Common myeloid progenitor, CD34-positive (primary cell): ENCODE measurements at regions of chr20 and their contacts with region 1.

Region 1: GRCh38 chr20:50085452-50086365 is 27.2 kb downstream of the UBE2V1 start:
- DNase-seq: peak; percentile 65 to 84 (median 80)
- H3K4me3 ChIP-seq: peak overlapping the region in 6 of 7 experiments; percentile 10 to 72 (median 54)
- H3K27ac ChIP-seq: peak overlapping the region; percentile 27 to 52
- H3K4me1 ChIP-seq: peaks cover 8 to 42% (median 29%) of the 10 kb centered on the region in 4 experiments
- H3K27me3 ChIP-seq: no peaks in the 10 kb centered on the region

Region 2: GRCh38 chr20:49928401-49929141 is 157.1 kb before region 1 on chr20:
- CTCF ChIA-PET with region 1: no interaction called
- POLR2A ChIA-PET with region 1: no interaction called
- DNase-seq: peak; percentile 86 to 93 (median 91)
- H3K4me3 ChIP-seq: peak overlapping the region in 2 of 7 experiments; percentile 12 to 19
- H3K27ac ChIP-seq: no peak overlapping the region
- H3K4me1 ChIP-seq: peaks cover 0 to 3% (median 2%) of the 10 kb centered on the region in 4 experiments
- H3K27me3 ChIP-seq: no peaks in the 10 kb centered on the region

Region 3: DNA sequence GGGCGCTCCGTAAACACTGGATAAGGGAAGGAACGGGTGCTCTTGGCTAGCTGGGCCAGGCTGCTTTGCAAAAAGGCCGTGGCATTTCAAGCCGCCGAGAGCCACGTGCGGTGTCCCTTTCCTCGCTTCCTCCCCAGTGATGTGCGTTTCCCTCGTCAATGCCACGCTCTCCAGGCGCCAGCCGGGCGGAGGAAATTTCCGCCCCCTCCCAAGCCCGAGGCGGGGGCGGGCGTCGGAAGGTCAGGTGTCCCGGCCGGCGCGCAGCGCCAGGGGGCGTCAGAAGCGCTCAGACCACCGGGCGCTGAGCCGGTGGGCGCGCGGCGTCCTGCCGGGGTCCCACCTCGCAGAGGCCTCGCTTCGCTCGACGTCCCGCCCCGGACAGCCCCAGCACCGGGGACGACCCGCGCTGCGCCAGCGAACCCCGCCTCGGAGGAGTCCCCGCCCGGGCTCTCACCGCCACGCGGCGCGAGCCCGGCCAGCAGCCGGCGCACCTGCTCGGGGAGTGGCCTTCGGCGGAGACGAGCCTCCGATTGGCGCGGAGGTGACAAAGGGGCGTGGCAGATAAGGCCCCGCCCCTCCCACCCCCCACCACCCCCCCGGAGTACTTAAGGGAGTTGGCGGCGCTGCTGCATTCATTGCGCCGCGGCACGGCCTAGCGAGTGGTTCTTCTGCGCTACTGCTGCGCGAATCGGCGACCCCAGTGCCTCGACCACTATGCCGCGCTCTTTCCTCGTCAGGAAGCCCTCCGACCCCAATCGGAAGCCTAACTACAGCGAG is 103.2 kb before region 1 on chr20 and contains the start of gene SNAI1:
- CTCF ChIA-PET with region 1: interaction called, 31 read pairs
- POLR2A ChIA-PET with region 1: no interaction called
- DNase-seq: peak; percentile 83 to 93 (median 92)
- H3K4me3 ChIP-seq: peak within 1 kb of the TSS in 6 of 7 experiments; percentile 42 to 73 (median 61)
- H3K27ac ChIP-seq: peak within 1 kb of the TSS in 1 of 2 experiments; percentile 78
- H3K4me1 ChIP-seq: peaks cover 0 to 70% (median 35%) of the 10 kb centered on the region in 4 experiments
- H3K27me3 ChIP-seq: no peaks in the 10 kb centered on the region

Region 4: GRCh38 chr20:50027611-50028105 is 58.1 kb before region 1 on chr20:
- CTCF ChIA-PET with region 1: no interaction called
- POLR2A ChIA-PET with region 1: no interaction called
- DNase-seq: no peak
- H3K4me3 ChIP-seq: no peak overlapping the region
- H3K27ac ChIP-seq: no peak overlapping the region
- H3K4me1 ChIP-seq: peaks cover 0 to 13% (median 0%) of the 10 kb centered on the region in 4 experiments
- H3K27me3 ChIP-seq: no peaks in the 10 kb centered on the region

Region 5: GRCh38 chr20:50070991-50071888 is 14.5 kb before region 1 on chr20:
- CTCF ChIA-PET with region 1: interaction called, 58 read pairs
- POLR2A ChIA-PET with region 1: no interaction called
- DNase-seq: peak; percentile 79 to 88 (median 84)
- H3K4me3 ChIP-seq: peak overlapping the region in 5 of 7 experiments; percentile 47 to 77 (median 63)
- H3K27ac ChIP-seq: no peak overlapping the region
- H3K4me1 ChIP-seq: peaks cover 0 to 8% (median 3%) of the 10 kb centered on the region in 4 experiments
- H3K27me3 ChIP-seq: no peaks in the 10 kb centered on the region

Region 6: DNA sequence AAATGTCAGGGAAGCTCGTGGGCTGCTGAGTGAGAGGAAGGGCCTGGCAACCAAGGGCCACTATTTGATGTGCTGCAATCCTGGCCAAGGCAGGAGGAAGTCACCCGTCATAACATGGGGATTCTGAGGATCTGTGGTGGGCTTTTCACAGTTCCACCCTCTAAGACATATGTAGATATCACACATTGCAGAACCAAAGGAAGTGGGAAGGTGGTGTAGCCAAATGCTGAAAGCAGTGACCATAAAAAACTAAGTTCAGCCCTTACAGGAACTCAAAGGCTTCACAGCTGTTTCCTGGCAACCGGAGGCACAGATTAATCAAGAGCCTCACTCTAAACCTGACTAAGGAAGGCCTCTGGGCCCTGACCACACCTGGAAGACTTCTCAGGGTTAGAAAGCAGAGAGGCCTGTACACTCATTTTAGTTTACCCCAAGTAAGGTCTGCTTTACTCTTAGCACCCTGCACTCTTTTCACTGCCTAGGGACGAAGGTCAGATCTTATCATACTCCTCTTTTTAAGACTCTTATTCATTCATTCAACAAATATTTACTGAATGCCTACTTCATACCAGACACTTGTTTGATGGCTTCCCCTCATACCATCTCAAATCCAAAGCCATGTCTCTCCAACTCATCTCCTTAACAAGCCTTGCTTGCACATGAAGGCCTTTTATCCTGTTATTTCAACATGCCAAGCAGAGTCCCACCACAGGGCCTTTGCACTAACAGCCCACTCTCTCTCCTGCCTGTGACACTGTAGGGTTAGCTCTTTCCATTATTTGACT is 24.6 kb after region 1 on chr20:
- CTCF ChIA-PET with region 1: interaction called, 10 read pairs
- POLR2A ChIA-PET with region 1: no interaction called
- DNase-seq: peak; percentile 93 to 100 (median 99)
- H3K4me3 ChIP-seq: peak overlapping the region in 4 of 7 experiments; percentile 3 to 91 (median 72)
- H3K27ac ChIP-seq: peak overlapping the region; percentile 33 to 59
- H3K4me1 ChIP-seq: peaks cover 52 to 78% (median 71%) of the 10 kb centered on the region in 4 experiments
- H3K27me3 ChIP-seq: no peaks in the 10 kb centered on the region

Region 7: GRCh38 chr20:50115591-50116372 is 30.1 kb after region 1 on chr20:
- CTCF ChIA-PET with region 1: interaction called, 10 read pairs
- POLR2A ChIA-PET with region 1: interaction called, 3 read pairs
- DNase-seq: peak; percentile 93 to 95 (median 94)
- H3K4me3 ChIP-seq: peak overlapping the region in 6 of 7 experiments; percentile 69 to 96 (median 78)
- H3K27ac ChIP-seq: peak overlapping the region; percentile 40 to 71
- H3K4me1 ChIP-seq: peaks cover 33 to 54% (median 47%) of the 10 kb centered on the region in 4 experiments
- H3K27me3 ChIP-seq: no peaks in the 10 kb centered on the region

Region 8: DNA sequence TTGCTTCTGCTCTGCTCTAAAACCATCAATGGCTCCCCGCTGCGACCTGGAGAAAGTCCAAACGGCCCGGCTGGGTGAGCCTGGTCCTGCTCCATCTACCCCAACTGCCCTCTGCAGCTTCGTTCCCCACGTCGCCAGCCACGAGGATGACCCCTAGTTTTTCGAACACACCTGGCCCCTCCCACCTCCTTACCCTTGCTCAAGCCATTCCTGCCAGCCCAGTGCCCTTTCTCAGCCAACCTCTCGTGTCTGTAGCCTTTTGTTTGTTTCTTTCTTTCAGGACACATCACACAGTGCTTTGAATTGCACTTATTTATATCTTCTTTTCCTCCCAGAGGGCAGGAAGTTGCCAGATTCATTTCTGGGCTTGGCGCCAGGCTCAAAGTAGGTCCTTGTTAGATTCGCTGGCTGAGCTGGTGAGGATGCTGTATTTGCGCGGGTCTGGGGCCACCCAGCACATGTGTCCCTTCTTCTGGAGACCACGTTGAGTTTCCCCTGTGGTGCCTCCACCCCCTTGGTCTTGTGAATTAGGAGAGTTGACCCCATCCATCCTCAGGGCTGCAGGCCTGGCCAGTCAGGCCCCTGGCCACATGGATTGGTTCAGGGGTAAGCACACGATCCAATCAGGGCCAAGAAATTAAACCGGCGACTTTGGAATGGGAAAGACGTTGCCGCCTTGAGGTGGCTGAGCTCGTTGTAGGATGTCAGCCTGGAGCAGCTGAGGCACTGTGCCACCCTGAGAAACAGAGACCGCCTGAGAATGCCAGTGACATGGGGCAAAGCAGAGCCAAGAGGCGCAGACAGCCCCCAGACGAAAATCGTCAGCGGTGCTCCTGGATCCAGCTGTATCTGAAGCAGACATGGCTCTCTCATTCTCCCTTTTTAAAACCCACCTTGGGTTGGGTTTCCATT is 260.9 kb after region 1 on chr20:
- CTCF ChIA-PET with region 1: no interaction called
- POLR2A ChIA-PET with region 1: no interaction called
- DNase-seq: peak; percentile 56 to 88 (median 86)
- H3K4me3 ChIP-seq: no peak overlapping the region
- H3K27ac ChIP-seq: no peak overlapping the region
- H3K4me1 ChIP-seq: peaks cover 13 to 58% (median 55%) of the 10 kb centered on the region in 4 experiments
- H3K27me3 ChIP-seq: peaks cover 0 to 7% (median 0%) of the 10 kb centered on the region in 5 experiments